HepG2 (cell line): ENCODE measurements at regions of chr16 and their contacts with region 1.

Region 1: DNA sequence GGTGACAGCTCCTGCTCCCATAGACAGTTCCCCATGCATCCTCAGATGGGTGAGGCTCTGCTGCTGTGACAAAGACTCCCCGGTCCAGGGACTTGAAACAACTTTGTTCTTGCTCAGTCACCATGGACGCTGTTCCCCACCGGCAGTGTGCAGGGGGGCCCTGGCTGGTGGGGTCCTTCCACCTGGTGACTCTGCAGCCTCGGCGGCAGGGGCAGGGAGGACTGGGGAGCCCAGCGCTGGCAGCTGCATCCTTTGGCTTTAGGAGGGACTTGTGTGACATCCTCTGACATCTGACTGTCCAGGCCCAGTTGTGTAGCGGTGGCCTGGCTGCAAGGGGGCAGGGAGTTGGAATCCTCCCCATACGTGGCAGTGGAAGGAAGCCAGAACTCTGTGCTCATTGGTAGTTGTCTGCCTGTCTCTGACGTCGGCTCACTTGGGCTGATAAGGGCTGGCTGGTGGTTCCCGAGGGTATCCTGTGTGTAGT is 107.3 kb downstream of the CMIP start:
- DNase-seq: no peak
- ATAC-seq: no peak
- H3K4me3 ChIP-seq: no peak overlapping the region
- H3K27ac ChIP-seq: peak overlapping the region; percentile 58
- H3K4me1 ChIP-seq: peaks cover 84% of the 10 kb centered on the region
- H3K27me3 ChIP-seq: no peaks in the 10 kb centered on the region
- CTCF ChIP-seq: no peak
- EP300 ChIP-seq: no peak
- POLR2A ChIP-seq: no peak
- RAD21 ChIP-seq: no peak

Region 2: GRCh38 chr16:81444448-81445121 is 107.3 kb before region 1 on chr16 and contains the start of gene CMIP:
- CTCF ChIA-PET with region 1: no interaction called
- POLR2A ChIA-PET with region 1: interaction called, 21 read pairs
- in situ Hi-C with region 1: no loop called
- intact Hi-C with region 1: no loop called
- DNase-seq: peak; percentile 68
- ATAC-seq: peak; percentile 4; the same call in 2 of the 3 replicates
- H3K4me3 ChIP-seq: peak within 1 kb of the TSS; percentile 92 to 99 (median 93)
- H3K27ac ChIP-seq: peak within 1 kb of the TSS; percentile 89
- H3K4me1 ChIP-seq: peaks cover 46% of the 10 kb centered on the region
- H3K27me3 ChIP-seq: peaks cover 2 to 24% of the 10 kb centered on the region in 2 experiments; a peak in 3 of 5 replicates
- CTCF ChIP-seq: no peak
- EP300 ChIP-seq: no peak
- POLR2A ChIP-seq: peak in 1 of 2 experiments; percentile 14; a peak in 1 of 4 replicates
- RAD21 ChIP-seq: peak; percentile 35; the same call in 1 of the 2 replicates
- total RNA-seq, gene CMIP: 10.9 and 21.7 TPM in 2 replicates

Region 3: DNA sequence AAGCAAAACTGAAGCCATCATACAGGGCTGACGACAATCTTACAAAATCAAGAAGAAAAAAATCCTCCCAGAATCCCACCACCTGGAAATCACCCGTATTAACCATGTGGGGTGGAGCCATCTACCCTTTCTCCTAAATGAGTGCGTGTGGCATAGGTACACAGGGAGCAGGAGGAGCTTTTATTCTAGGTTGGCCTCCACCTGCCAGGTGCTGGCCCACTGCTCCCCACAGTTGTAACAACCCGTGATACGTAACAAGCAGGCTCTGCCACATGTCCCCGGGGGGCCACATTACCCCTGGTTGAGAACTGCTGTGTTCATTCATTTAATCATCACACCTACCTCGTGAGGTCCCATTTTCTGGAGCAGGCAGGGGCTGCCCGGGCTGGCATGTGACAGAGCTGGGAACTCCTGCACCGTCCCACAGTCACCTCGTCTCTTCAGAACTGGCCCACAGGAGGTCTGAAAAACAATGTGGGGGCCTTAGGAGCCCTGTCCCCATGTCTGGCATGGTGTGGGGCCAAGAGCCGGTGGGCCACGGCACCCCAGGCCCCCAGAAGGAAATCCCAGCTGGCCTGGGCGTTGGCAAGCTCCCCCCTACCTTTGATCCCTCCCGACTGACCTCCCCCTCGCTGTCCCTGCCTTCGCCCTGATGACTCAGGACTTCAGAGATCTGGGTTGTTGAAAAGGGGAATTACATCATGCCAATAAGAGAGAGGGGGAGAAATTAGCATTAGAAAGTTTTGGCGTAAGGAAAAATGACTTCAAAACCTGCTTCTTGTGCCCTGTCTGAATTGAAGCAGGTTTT is 94.3 kb before region 1 on chr16:
- CTCF ChIA-PET with region 1: no interaction called
- POLR2A ChIA-PET with region 1: interaction called, 21 read pairs
- in situ Hi-C with region 1: no loop called
- intact Hi-C with region 1: loop called (anchors 1 kb)
- DNase-seq: peak; percentile 89
- ATAC-seq: peak; percentile 58
- H3K4me3 ChIP-seq: peak overlapping the region in 1 of 3 experiments; percentile 42; a peak in 3 of 6 replicates
- H3K27ac ChIP-seq: peak overlapping the region; percentile 70
- H3K4me1 ChIP-seq: peaks cover 100% of the 10 kb centered on the region
- H3K27me3 ChIP-seq: no peaks in the 10 kb centered on the region
- CTCF ChIP-seq: no peak
- EP300 ChIP-seq: peak; percentile 57 to 87; a peak in 2 of 4 replicates
- POLR2A ChIP-seq: peak in 1 of 2 experiments; percentile 6; a peak in 1 of 4 replicates
- RAD21 ChIP-seq: no peak; the same call in 1 of the 2 replicates

Region 4: GRCh38 chr16:81537721-81538561 is 13.9 kb before region 1 on chr16:
- CTCF ChIA-PET with region 1: no interaction called
- POLR2A ChIA-PET with region 1: interaction called, 24 read pairs
- in situ Hi-C with region 1: no loop called
- intact Hi-C with region 1: loop called (anchors 2 kb)
- DNase-seq: no peak
- ATAC-seq: no peak
- H3K4me3 ChIP-seq: no peak overlapping the region
- H3K27ac ChIP-seq: no peak overlapping the region
- H3K4me1 ChIP-seq: peaks cover 100% of the 10 kb centered on the region
- H3K27me3 ChIP-seq: no peaks in the 10 kb centered on the region
- CTCF ChIP-seq: no peak
- EP300 ChIP-seq: no peak
- POLR2A ChIP-seq: no peak
- RAD21 ChIP-seq: no peak

Region 5: GRCh38 chr16:81582655-81583441 is 31.0 kb after region 1 on chr16:
- CTCF ChIA-PET with region 1: no interaction called
- POLR2A ChIA-PET with region 1: interaction called, 22 read pairs
- in situ Hi-C with region 1: no loop called
- intact Hi-C with region 1: loop called (anchors 2 kb)
- DNase-seq: peak; percentile 79
- ATAC-seq: peak; percentile 69
- H3K4me3 ChIP-seq: no peak overlapping the region
- H3K27ac ChIP-seq: peak overlapping the region; percentile 58
- H3K4me1 ChIP-seq: peaks cover 85% of the 10 kb centered on the region
- H3K27me3 ChIP-seq: no peaks in the 10 kb centered on the region
- CTCF ChIP-seq: peak; percentile 82
- EP300 ChIP-seq: peak; percentile 51 to 72; a peak in 2 of 4 replicates
- POLR2A ChIP-seq: 0 out of 4 replicates have a peak, but pooled peaks of 1 of the 2 experiments have one; percentile 21
- RAD21 ChIP-seq: no peak